Activated CD4-positive, alpha-beta T cell treated with anti-CD3 and anti-CD28 coated beads, Interleukin-2, amount 10 ng/mL, durations not matched to agents 24 days and 14 days (primary cell): ENCODE measurements at regions of chr6 and their contacts with region 1.

Region 1: DNA sequence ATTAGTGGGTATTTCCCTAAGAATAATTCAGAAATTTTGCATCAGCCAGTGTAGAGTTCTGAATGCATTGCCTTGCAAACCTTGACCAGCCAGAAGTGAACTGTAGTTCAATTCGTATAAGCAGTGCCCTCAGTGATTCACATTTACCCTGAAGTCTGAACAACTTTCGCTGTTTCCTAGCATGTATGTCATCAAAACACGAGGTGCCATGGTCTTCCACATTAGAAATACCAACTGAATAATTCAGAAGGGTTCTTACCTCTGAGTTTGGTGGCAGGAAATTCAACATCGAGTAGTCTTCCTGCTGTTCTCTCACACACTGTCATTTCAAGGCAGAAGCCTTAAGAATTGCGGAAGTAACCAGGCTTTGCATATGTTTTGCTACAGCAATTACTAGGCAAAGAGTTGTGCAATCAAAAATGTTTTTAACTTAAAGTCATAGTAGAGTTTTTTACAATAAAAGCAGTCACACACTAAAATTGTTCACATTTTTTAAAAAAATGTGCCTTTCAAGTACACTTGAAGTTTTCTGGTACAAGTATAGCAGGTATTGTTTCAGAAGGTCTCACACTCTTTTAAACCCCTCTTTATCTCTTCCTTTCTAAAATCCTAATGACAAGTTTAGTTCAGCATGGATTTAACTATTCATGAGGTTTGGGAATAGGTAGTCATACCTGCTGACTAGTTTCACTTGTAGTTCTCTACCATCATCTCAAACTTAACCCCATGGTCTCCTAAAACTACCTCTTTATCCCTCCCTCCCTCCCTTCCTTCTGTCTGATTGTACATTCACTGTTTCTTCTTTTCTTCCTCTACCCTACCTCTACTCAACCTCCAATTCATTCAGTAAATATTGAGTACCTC is 118.3 kb downstream of the STXBP5 start:
- DNase-seq: peak; percentile 78
- H3K4me3 Mint-ChIP-seq: peak overlapping the region; percentile 68
- H3K27ac Mint-ChIP-seq: peak overlapping the region; percentile 79
- H3K4me1 Mint-ChIP-seq: peaks cover 13% of the 10 kb centered on the region
- H3K27me3 Mint-ChIP-seq: no peaks in the 10 kb centered on the region

Region 2: DNA sequence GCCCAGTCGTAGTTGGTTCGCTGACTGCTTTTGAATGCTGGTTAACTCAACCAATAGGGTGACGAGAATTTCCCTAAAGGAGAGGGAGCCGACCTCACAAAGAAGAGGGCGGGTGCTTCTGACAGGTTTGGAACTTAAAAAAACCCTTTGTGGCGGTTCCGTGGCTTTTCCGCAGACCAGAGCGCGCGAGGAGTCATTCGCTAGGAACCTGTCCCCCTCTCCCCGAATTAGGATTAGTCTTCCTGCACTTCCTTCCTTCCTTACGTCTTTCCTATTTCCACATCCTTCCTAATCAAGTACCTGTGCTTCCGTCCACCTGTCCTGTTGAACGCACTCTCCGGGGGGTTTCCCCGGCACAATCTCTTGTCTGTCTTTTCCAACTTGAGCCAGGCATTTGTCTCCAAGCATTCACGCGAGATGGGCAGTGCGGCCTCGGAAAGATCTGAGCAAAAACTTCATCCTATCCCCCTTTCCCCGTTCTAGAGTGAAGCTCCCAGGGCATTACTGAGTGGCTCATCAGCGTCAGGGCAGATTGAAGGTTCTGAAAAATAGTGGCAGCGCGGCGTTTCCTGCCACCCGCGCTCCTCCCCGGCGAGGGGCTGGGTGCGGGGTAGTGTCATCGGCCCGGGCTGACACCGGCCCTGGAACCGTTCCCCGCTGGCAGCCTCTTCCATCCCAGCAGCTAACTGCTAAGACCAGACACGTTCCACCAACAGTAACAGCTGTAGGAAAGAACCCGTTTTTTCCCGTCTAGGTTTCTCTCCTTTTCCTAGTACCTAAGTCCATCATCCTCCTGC is 119.8 kb before region 1 on chr6:
- intact Hi-C with region 1: loop called (anchors 5 kb)
- DNase-seq: peak; percentile 95
- H3K4me3 Mint-ChIP-seq: peak overlapping the region; percentile 98
- H3K27ac Mint-ChIP-seq: peak overlapping the region; percentile 93
- H3K4me1 Mint-ChIP-seq: peaks cover 32% of the 10 kb centered on the region
- H3K27me3 Mint-ChIP-seq: no peaks in the 10 kb centered on the region

Region 3: DNA sequence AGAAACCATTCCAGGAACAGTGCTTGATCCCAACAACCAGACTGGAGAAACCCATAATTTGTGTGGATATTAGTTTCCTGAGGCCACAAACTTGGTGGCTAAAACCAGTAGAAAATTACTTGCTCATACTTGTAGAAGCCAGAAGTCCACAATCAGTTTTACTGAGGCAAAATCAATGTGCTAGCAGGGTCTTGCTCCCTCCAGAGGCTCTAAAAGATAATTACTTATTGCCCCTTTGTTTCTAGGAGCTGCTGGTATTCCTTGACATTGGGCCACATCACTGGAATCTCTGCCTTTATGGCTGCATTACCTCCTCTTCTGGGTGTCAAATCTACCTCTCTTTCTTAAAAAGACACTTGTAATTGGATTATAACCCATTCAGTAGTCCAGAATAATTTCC is 43.8 kb after region 1 on chr6:
- intact Hi-C with region 1: no loop called
- DNase-seq: no peak
- H3K4me3 Mint-ChIP-seq: no peak overlapping the region
- H3K27ac Mint-ChIP-seq: no peak overlapping the region
- H3K4me1 Mint-ChIP-seq: no peaks in the 10 kb centered on the region
- H3K27me3 Mint-ChIP-seq: no peaks in the 10 kb centered on the region